ENCODE measurements at regions of chr19 and their contacts with region 1.

Region 1: GRCh38 chr19:461664-462551 is 1.1 kb upstream of the SHC2 start:
- DNase-seq: peak; percentile 66
- ATAC-seq: peak; percentile 67
- H3K4me3 ChIP-seq: peak overlapping the region; percentile 49 to 84 (median 81)
- H3K27ac ChIP-seq: no peak overlapping the region
- H3K4me1 ChIP-seq: peaks cover 45% of the 10 kb centered on the region
- H3K27me3 ChIP-seq: peaks cover 1 to 5% of the 10 kb centered on the region in 2 experiments; a peak in 2 of 5 replicates
- CTCF ChIP-seq: no peak
- EP300 ChIP-seq: no peak; a peak in 1 of 4 replicates
- POLR2A ChIP-seq: no peak; a peak in 1 of 4 replicates
- RAD21 ChIP-seq: no peak

Region 2: DNA sequence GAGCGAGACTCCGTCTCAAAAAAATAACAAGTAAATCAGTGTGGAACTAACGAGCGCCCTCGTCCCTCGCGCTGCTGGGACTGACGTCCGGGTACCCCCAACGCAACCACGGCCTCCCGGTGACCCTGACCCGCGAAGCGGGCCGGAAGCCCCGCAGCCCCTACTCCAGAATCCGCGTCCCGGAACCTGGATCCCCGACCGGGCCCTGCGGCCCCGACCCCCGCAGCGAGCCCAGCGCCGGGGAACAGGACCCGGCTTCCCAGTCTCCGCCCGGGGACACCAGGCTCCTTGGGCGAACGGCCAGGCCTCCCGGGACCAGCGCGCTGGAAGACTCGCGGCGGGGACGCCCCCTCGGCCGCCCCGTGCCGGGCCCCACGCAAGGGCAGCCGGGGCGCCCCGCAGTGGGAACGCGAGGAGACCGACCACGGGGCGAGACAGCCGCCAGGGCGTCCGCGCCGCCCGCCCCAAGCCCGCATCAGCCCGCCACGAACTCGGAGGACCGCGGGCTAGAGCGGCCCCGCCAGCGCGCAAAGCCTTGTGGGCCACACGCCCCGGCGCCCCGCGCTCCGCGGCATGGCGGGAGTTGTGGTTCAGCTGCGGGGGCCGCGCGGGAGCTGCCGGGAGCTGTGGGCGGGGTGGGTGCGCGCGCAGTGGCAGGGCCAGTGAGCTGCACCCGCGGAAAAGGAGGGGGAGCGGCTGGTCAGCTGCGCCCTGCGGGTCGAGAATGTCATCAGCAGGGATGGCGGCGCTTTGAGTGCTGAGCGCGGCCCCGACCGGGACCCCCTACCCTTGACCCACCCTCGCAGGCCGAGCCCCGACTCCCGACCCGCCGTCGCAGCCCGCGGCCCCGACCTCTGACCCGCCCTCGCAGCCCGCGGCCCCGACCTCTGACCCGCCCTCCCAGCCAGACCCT is 26.9 kb after region 1 on chr19:
- CTCF ChIA-PET with region 1: no interaction called
- POLR2A ChIA-PET with region 1: interaction called, 16 read pairs
- in situ Hi-C with region 1: no loop called
- intact Hi-C with region 1: no loop called
- DNase-seq: peak; percentile 82
- ATAC-seq: peak; percentile 79
- H3K4me3 ChIP-seq: peak overlapping the region; percentile 92 to 94 (median 93)
- H3K27ac ChIP-seq: peak overlapping the region; percentile 99
- H3K4me1 ChIP-seq: peaks cover 57% of the 10 kb centered on the region
- H3K27me3 ChIP-seq: no peaks in the 10 kb centered on the region
- CTCF ChIP-seq: no peak; the same call in 1 of the 2 replicates
- EP300 ChIP-seq: no peak
- POLR2A ChIP-seq: peak; percentile 53 to 80; a peak in 2 of 4 replicates
- RAD21 ChIP-seq: peak; percentile 55